ENCODE measurements at regions of chr7 and their contacts with region 1.

Region 1: GRCh38 chr7:66654123-66654732 is 25.5 kb downstream of the KCTD7 start:
- DNase-seq: peak; percentile 100
- H3K4me3 Mint-ChIP-seq: peak overlapping the region; percentile 97
- H3K27ac Mint-ChIP-seq: peak overlapping the region; percentile 97
- H3K4me1 Mint-ChIP-seq: peaks cover 22% of the 10 kb centered on the region
- H3K27me3 Mint-ChIP-seq: no peaks in the 10 kb centered on the region

Region 2: DNA sequence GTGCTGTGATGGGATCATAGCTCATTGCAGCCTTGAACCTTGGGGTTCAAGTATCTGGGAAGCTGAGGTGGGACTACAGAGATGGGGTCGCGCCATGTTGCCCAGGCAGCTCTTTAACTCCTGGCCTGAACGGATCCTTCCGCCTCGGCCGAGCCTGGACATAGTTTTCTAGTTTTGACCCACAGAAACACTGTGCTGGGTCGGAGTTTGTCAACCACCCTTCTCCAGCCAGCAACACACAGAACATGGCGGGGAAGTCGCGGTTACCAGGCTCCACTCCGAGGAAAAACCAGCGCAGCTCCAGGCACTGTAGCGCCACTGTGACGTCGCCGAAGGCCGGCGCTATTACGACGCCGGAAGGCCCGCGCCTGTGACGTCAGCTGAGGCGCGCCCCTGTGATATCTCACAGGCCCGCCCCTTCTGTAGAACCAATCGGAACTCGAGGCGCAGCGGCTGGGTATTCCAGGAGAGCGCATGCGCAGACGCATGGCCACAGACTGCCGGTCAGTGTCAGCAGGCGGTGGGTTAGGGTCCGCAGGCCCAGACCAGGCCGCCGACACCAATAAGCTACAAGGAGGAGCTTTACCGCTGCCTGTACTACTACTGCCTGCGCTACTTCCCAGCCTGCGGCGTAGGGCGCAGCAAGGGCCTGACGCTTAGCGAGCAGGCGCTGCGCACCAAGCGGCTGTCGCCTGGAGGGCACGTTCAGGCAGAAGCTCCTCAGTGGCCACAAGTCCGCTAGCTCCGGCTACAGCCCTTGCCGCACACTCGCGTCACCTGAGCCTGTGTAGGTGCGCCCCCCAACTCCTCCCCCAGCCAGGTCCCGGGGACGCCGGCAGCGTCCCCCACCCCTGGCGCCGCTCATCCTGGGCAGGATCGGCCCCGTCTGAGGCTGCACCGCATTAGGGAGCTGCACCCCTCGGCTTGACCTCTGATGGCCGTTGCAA is 160.7 kb before region 1 on chr7:
- intact Hi-C with region 1: loop called (anchors 1 kb)
- DNase-seq: peak; percentile 99
- H3K4me3 Mint-ChIP-seq: peak overlapping the region; percentile 92
- H3K27ac Mint-ChIP-seq: peak overlapping the region; percentile 95
- H3K4me1 Mint-ChIP-seq: peaks cover 12% of the 10 kb centered on the region
- H3K27me3 Mint-ChIP-seq: no peaks in the 10 kb centered on the region

Region 3: GRCh38 chr7:66591799-66592596 is 62.2 kb before region 1 on chr7:
- intact Hi-C with region 1: loop called (anchors 1 kb)
- DNase-seq: peak; percentile 97
- H3K4me3 Mint-ChIP-seq: peak overlapping the region; percentile 98
- H3K27ac Mint-ChIP-seq: peak overlapping the region; percentile 95
- H3K4me1 Mint-ChIP-seq: peaks cover 33% of the 10 kb centered on the region
- H3K27me3 Mint-ChIP-seq: no peaks in the 10 kb centered on the region

Region 4: GRCh38 chr7:66681491-66682349 is 27.5 kb after region 1 on chr7:
- intact Hi-C with region 1: loop called (anchors 1 kb)
- DNase-seq: peak; percentile 99
- H3K4me3 Mint-ChIP-seq: peak overlapping the region; percentile 93
- H3K27ac Mint-ChIP-seq: peak overlapping the region; percentile 92
- H3K4me1 Mint-ChIP-seq: peaks cover 19% of the 10 kb centered on the region
- H3K27me3 Mint-ChIP-seq: no peaks in the 10 kb centered on the region

Region 5: GRCh38 chr7:66699998-66700397 is 45.8 kb after region 1 on chr7:
- intact Hi-C with region 1: no loop called
- DNase-seq: no peak
- H3K4me3 Mint-ChIP-seq: no peak overlapping the region
- H3K27ac Mint-ChIP-seq: no peak overlapping the region
- H3K4me1 Mint-ChIP-seq: no peaks in the 10 kb centered on the region
- H3K27me3 Mint-ChIP-seq: no peaks in the 10 kb centered on the region

Measured in activated CD4-positive, alpha-beta T cell treated with anti-CD3 and anti-CD28 coated beads, Interleukin-2, amount 10 ng/mL, durations not matched to agents 24 days and 14 days (primary cell).